H1 (cell line): ENCODE measurements at regions of chr1 and their contacts with region 1.

Region 1: GRCh38 chr1:41294216-41294615 is 52.1 kb upstream of the SCMH1 start:
- DNase-seq: no peak
- H3K4me3 ChIP-seq: no peak overlapping the region
- H3K27ac ChIP-seq: no peak overlapping the region
- H3K4me1 ChIP-seq: no peaks in the 10 kb centered on the region
- H3K27me3 ChIP-seq: peaks cover 0 to 2% (median 0%) of the 10 kb centered on the region in 4 experiments; a peak in 1 of 7 replicates
- CTCF ChIP-seq: no peak
- EP300 ChIP-seq: no peak
- POLR2A ChIP-seq: no peak
- RAD21 ChIP-seq: no peak

Region 2: DNA sequence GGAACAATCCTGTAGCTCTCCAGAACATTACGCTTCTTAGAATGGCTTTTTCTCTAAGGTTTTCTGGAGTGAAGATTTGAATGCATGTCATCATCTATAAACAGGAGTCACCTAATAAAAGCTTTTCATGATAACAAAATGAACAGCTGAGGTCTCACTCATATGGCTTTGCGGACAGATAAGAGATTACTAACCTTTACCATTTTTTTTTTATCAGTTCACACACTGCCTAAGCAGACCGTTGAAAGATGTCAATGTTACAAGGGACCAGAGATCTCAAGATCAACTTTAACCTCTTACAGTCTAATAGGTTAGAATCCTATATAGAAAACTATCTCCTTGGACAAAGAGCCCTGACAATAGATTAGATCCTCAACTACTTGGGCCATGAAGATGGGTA is 93.5 kb before region 1 on chr1:
- CTCF ChIA-PET with region 1: no interaction called
- POLR2A ChIA-PET with region 1: no interaction called
- DNase-seq: no peak
- H3K4me3 ChIP-seq: no peak overlapping the region
- H3K27ac ChIP-seq: no peak overlapping the region
- H3K4me1 ChIP-seq: no peaks in the 10 kb centered on the region
- H3K27me3 ChIP-seq: no peaks in the 10 kb centered on the region
- CTCF ChIP-seq: no peak
- EP300 ChIP-seq: no peak
- POLR2A ChIP-seq: no peak
- RAD21 ChIP-seq: no peak

Region 3: DNA sequence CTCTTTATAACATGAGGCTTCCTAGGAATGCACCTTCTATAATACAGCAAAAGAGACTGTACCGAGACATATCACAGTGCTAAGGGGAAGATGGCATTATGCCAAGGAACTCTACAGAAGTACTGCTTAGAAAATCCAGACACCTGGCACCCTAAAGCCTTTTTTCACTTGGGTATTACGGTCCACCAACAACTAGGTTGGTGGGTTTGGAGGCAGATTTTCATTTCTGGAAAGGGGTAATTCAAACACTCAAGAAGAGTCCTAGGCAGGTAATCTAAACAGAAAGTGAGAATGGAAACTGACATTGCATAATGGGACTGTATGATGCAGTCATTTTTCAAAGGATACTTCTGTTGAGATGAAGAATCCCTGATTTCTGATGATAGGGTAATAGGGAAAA is 71.7 kb before region 1 on chr1:
- CTCF ChIA-PET with region 1: no interaction called
- POLR2A ChIA-PET with region 1: no interaction called
- DNase-seq: no peak
- H3K4me3 ChIP-seq: no peak overlapping the region
- H3K27ac ChIP-seq: no peak overlapping the region
- H3K4me1 ChIP-seq: peaks cover 0 to 4% (median 0%) of the 10 kb centered on the region in 4 experiments; a peak in 1 of 7 replicates
- H3K27me3 ChIP-seq: no peaks in the 10 kb centered on the region
- CTCF ChIP-seq: no peak
- EP300 ChIP-seq: no peak
- POLR2A ChIP-seq: no peak
- RAD21 ChIP-seq: no peak

Region 4: GRCh38 chr1:41313661-41314131 is 19.5 kb after region 1 on chr1:
- CTCF ChIA-PET with region 1: interaction called, 213 read pairs
- POLR2A ChIA-PET with region 1: interaction called, 3 read pairs
- DNase-seq: peak; percentile 29 to 70
- H3K4me3 ChIP-seq: no peak overlapping the region
- H3K27ac ChIP-seq: no peak overlapping the region
- H3K4me1 ChIP-seq: peaks cover 0 to 14% (median 2%) of the 10 kb centered on the region in 4 experiments; a peak in 4 of 7 replicates
- H3K27me3 ChIP-seq: peaks cover 0 to 2% (median 0%) of the 10 kb centered on the region in 4 experiments; a peak in 1 of 7 replicates
- CTCF ChIP-seq: peak; percentile 64 to 87 (median 81)
- EP300 ChIP-seq: no peak
- POLR2A ChIP-seq: no peak
- RAD21 ChIP-seq: peak; percentile 55 to 73